ENCODE measurements at regions of chr7 and their contacts with region 1.

Region 1: DNA sequence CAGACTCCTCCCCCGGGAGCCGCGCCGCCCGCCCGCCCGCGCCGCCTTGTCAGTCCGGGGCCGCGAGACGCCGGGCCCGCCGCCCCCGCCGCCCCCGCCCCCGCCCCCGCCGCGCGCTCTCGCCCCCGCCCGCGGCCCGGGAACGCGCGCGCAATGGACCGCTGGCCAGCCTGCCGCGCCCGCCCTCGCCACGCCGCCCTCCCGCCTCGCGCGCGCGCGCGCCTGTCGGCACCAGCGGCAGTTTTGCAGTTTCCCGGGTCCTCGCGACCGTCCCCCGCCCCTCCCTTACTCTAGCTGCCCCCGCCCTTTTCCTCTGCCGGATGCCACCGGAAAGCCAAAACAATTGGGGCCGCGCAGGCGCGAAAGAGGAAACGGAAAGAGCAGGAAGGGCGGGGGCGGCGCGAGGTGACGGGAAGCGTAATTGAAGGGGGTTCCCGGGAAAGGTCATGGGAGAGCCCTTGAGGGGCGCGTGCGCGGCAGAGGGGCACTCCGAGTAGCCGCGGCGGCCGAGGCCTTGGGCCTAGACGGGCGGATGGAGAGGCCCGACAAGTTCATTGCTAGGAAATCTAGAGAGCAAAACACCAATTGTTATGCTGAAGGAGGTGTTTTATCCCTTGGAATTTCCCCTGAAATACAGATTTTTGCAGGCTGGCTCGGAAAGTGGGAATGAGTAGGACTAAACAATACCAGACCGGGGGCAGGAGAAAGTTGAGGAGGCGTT is 400 bp upstream of the KBTBD2 start:
- DNase-seq: peak; percentile 92 to 99 (median 96)
- ATAC-seq: peak; percentile 59
- H3K4me3 ChIP-seq: peak overlapping the region; percentile 81
- H3K4me3 Mint-ChIP-seq: peak overlapping the region; percentile 91
- H3K27ac ChIP-seq: peak overlapping the region; percentile 98 to 99
- H3K27ac Mint-ChIP-seq: peak overlapping the region; percentile 97
- H3K4me1 ChIP-seq: peaks cover 29% of the 10 kb centered on the region
- H3K4me1 Mint-ChIP-seq: peaks cover 55% of the 10 kb centered on the region
- H3K27me3 ChIP-seq: no peaks in the 10 kb centered on the region
- H3K27me3 Mint-ChIP-seq: no peaks in the 10 kb centered on the region
- CTCF ChIP-seq: no peak

Region 2: GRCh38 chr7:32495298-32496176 is 396.4 kb before region 1 on chr7 and contains the start of gene AVL9:
- CTCF ChIA-PET with region 1: no interaction called
- POLR2A ChIA-PET with region 1: interaction called, 24 read pairs
- intact Hi-C with region 1: loop called (anchors 5 kb)
- DNase-seq: peak; percentile 97 to 100 (median 99)
- ATAC-seq: peak; percentile 93
- H3K4me3 ChIP-seq: peak within 1 kb of the TSS; percentile 86
- H3K4me3 Mint-ChIP-seq: peak within 1 kb of the TSS; percentile 92
- H3K27ac ChIP-seq: peak within 1 kb of the TSS; percentile 94 to 95
- H3K27ac Mint-ChIP-seq: peak within 1 kb of the TSS; percentile 94
- H3K4me1 ChIP-seq: peaks cover 22% of the 10 kb centered on the region
- H3K4me1 Mint-ChIP-seq: peaks cover 53% of the 10 kb centered on the region
- H3K27me3 ChIP-seq: no peaks in the 10 kb centered on the region
- H3K27me3 Mint-ChIP-seq: no peaks in the 10 kb centered on the region
- CTCF ChIP-seq: no peak
- total RNA-seq, gene AVL9: 23.3 to 25.4 TPM

Region 3: DNA sequence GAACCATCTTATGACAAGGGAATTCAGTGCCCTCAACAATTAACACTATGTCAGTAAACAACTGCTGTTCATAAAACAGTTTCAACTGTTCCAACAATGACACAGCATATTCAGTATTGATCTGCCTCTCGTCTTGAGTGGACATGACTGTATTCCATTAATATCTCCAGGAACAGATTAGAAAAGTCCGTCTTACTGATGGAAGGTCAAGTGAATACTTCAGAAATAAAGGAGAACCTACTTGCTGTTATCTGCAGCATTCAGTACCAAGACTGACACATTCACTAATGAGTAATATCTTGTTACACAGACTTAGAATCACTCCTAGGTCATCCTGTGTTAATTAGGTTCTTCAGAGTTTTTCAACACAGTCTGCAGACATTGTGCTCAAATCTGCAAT is 12.5 kb before region 1 on chr7:
- CTCF ChIA-PET with region 1: interaction called, 4 read pairs
- POLR2A ChIA-PET with region 1: interaction called, 8 read pairs
- intact Hi-C with region 1: loop called in 1 of 2 experiments (anchors 2 kb)
- DNase-seq: no peak
- ATAC-seq: no peak
- H3K4me3 ChIP-seq: no peak overlapping the region
- H3K4me3 Mint-ChIP-seq: peak overlapping the region; percentile 3
- H3K27ac ChIP-seq: no peak overlapping the region
- H3K27ac Mint-ChIP-seq: peak overlapping the region; percentile 12
- H3K4me1 ChIP-seq: peaks cover 14% of the 10 kb centered on the region
- H3K4me1 Mint-ChIP-seq: peaks cover 74% of the 10 kb centered on the region
- H3K27me3 ChIP-seq: no peaks in the 10 kb centered on the region
- H3K27me3 Mint-ChIP-seq: no peaks in the 10 kb centered on the region
- CTCF ChIP-seq: no peak

Region 4: GRCh38 chr7:32942786-32943653 is 51.1 kb after region 1 on chr7:
- CTCF ChIA-PET with region 1: interaction called, 8 read pairs
- POLR2A ChIA-PET with region 1: interaction called, 55 read pairs
- intact Hi-C with region 1: loop called (anchors 1 to 2 kb)
- DNase-seq: peak; percentile 31 to 84 (median 62)
- ATAC-seq: peak; percentile 89
- H3K4me3 ChIP-seq: peak overlapping the region; percentile 63
- H3K4me3 Mint-ChIP-seq: peak overlapping the region; percentile 85
- H3K27ac ChIP-seq: no peak overlapping the region
- H3K27ac Mint-ChIP-seq: no peak overlapping the region
- H3K4me1 ChIP-seq: peaks cover 11% of the 10 kb centered on the region
- H3K4me1 Mint-ChIP-seq: peaks cover 11% of the 10 kb centered on the region
- H3K27me3 ChIP-seq: no peaks in the 10 kb centered on the region
- H3K27me3 Mint-ChIP-seq: peaks cover 25% of the 10 kb centered on the region
- CTCF ChIP-seq: peak; percentile 69

Region 5: GRCh38 chr7:33050535-33051318 is 158.8 kb after region 1 on chr7:
- CTCF ChIA-PET with region 1: interaction called, 3 read pairs
- POLR2A ChIA-PET with region 1: interaction called, 3 read pairs
- intact Hi-C with region 1: loop called in 1 of 2 experiments (anchors 5 kb)
- DNase-seq: peak in 6 of 14 experiments; percentile 4 to 78 (median 60)
- ATAC-seq: peak; percentile 67
- H3K4me3 ChIP-seq: no peak overlapping the region
- H3K4me3 Mint-ChIP-seq: no peak overlapping the region
- H3K27ac ChIP-seq: no peak overlapping the region
- H3K27ac Mint-ChIP-seq: peak overlapping the region; percentile 60
- H3K4me1 ChIP-seq: peaks cover 16% of the 10 kb centered on the region
- H3K4me1 Mint-ChIP-seq: peaks cover 71% of the 10 kb centered on the region
- H3K27me3 ChIP-seq: no peaks in the 10 kb centered on the region
- H3K27me3 Mint-ChIP-seq: no peaks in the 10 kb centered on the region
- CTCF ChIP-seq: peak; percentile 79

Region 6: DNA sequence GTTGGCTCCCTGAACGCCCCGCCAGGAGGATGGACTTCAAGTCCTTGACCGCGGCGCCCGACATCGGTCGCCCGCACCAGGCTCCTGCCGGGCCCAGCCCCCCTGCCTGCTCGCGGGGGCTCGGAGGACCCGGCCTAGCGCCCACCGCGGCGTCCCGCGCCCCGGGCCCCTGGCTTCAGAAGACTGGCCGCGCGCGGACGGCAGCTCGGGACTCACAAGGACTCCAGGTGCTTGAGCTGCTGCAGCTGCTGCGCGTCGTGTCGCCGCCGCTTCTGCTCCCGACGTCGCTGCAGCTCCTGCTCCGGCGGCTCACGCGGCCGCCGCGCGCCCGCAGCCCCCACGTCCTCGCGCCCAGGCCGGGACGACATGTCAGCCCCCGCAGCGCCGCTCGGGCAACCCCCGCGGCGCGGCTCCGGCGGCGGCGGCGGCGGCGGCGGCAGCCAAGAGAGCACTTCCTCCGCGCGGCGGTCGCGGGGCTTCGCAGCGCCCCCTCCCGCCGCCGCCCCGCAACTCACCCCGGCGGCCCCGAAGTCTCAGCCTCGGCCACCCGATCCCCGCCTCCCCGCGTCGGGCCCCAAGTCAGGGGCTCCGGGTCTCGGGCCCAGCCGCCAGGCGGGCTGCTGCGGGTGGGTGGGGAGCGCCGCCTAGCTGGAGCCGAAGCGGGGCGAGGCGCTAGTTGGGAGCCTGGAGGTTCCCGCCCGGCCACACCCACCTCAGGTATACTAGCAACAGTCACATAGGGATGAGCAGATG is 217.2 kb after region 1 on chr7 and contains the start of gene RP9:
- CTCF ChIA-PET with region 1: interaction called, 11 read pairs
- POLR2A ChIA-PET with region 1: interaction called, 13 read pairs
- intact Hi-C with region 1: loop called in 1 of 2 experiments (anchors 5 kb)
- DNase-seq: peak; percentile 52 to 93 (median 68)
- ATAC-seq: peak; percentile 88
- H3K4me3 ChIP-seq: peak within 1 kb of the TSS; percentile 78
- H3K4me3 Mint-ChIP-seq: peak within 1 kb of the TSS; percentile 90
- H3K27ac ChIP-seq: peak within 1 kb of the TSS in 1 of 2 donors; percentile 51
- H3K27ac Mint-ChIP-seq: peak within 1 kb of the TSS; percentile 68
- H3K4me1 ChIP-seq: peaks cover 34% of the 10 kb centered on the region
- H3K4me1 Mint-ChIP-seq: peaks cover 48% of the 10 kb centered on the region
- H3K27me3 ChIP-seq: peaks cover 2 to 3% of the 10 kb centered on the region in 2 experiments
- H3K27me3 Mint-ChIP-seq: peaks cover 19% of the 10 kb centered on the region
- CTCF ChIP-seq: peak; percentile 49
- total RNA-seq, gene RP9: 17.6 to 20.3 TPM